ENCODE measurements at regions of chr1 and their contacts with region 1.

Region 1: GRCh38 chr1:111619635-111620440 is at the start of gene RAP1A:
- DNase-seq: peak; percentile 91 to 94
- ATAC-seq: peak; percentile 88 to 90
- H3K4me3 ChIP-seq: peak within 1 kb of the TSS; percentile 59 to 91 (median 72)
- H3K27ac ChIP-seq: peak within 1 kb of the TSS; percentile 94 to 98 (median 97)
- H3K4me1 ChIP-seq: peaks cover 36 to 48% of the 10 kb centered on the region in 2 donors
- H3K27me3 ChIP-seq: no peaks in the 10 kb centered on the region
- CTCF ChIP-seq: peak in 1 of 5 experiments; percentile 18
- POLR2A ChIP-seq: peak; percentile 82 to 86
- total RNA-seq, gene RAP1A: 49.4 to 72.1 (median 57.9) TPM

Region 2: GRCh38 chr1:111507411-111508201 is 112.2 kb before region 1 on chr1:
- in situ Hi-C with region 1: loop called in 1 of 4 experiments (anchors 10 kb)
- intact Hi-C with region 1: no loop called
- DNase-seq: peak; percentile 47 to 68
- ATAC-seq: peak; percentile 78 to 86
- H3K4me3 ChIP-seq: peak overlapping the region; percentile 47 to 55 (median 48)
- H3K27ac ChIP-seq: peak overlapping the region; percentile 85 to 92 (median 90)
- H3K4me1 ChIP-seq: peaks cover 17 to 35% of the 10 kb centered on the region in 2 donors
- H3K27me3 ChIP-seq: no peaks in the 10 kb centered on the region
- CTCF ChIP-seq: no peak
- POLR2A ChIP-seq: peak in 1 of 2 donors; percentile 10

Region 3: DNA sequence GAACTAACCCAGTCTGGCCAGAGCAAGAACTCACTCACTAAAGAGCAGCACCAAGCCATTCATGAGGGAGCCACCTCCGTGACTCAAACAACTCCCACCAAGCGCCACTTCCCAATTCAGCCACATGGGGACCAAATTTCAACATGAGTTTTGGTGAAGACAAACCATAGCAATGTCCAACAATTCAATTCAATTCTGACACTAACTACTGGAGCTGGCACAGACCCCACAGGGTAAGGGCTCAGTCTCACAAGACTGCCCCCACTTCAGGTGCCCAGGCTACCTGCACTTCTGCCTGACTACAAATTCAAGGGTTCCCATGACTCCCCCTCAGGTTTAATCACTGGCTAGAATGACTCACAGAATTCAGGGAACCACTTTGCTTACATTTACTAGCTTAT is 49.1 kb before region 1 on chr1:
- in situ Hi-C with region 1: no loop called
- intact Hi-C with region 1: no loop called
- DNase-seq: no peak
- ATAC-seq: no peak
- H3K4me3 ChIP-seq: no peak overlapping the region
- H3K27ac ChIP-seq: no peak overlapping the region
- H3K4me1 ChIP-seq: no peaks in the 10 kb centered on the region
- H3K27me3 ChIP-seq: no peaks in the 10 kb centered on the region
- CTCF ChIP-seq: peak in 2 of 5 experiments; percentile 18 to 32
- POLR2A ChIP-seq: no peak

Region 4: GRCh38 chr1:111592389-111593361 is 27.2 kb before region 1 on chr1:
- in situ Hi-C with region 1: no loop called
- intact Hi-C with region 1: loop called (anchors 1 kb)
- DNase-seq: peak; percentile 92 to 94
- ATAC-seq: peak; percentile 94 to 95
- H3K4me3 ChIP-seq: peak overlapping the region; percentile 3 to 26 (median 20)
- H3K27ac ChIP-seq: peak overlapping the region; percentile 81 to 89 (median 88)
- H3K4me1 ChIP-seq: peaks cover 24 to 36% of the 10 kb centered on the region in 2 donors
- H3K27me3 ChIP-seq: no peaks in the 10 kb centered on the region
- CTCF ChIP-seq: no peak
- POLR2A ChIP-seq: peak in 1 of 2 donors; percentile 10

Region 5: DNA sequence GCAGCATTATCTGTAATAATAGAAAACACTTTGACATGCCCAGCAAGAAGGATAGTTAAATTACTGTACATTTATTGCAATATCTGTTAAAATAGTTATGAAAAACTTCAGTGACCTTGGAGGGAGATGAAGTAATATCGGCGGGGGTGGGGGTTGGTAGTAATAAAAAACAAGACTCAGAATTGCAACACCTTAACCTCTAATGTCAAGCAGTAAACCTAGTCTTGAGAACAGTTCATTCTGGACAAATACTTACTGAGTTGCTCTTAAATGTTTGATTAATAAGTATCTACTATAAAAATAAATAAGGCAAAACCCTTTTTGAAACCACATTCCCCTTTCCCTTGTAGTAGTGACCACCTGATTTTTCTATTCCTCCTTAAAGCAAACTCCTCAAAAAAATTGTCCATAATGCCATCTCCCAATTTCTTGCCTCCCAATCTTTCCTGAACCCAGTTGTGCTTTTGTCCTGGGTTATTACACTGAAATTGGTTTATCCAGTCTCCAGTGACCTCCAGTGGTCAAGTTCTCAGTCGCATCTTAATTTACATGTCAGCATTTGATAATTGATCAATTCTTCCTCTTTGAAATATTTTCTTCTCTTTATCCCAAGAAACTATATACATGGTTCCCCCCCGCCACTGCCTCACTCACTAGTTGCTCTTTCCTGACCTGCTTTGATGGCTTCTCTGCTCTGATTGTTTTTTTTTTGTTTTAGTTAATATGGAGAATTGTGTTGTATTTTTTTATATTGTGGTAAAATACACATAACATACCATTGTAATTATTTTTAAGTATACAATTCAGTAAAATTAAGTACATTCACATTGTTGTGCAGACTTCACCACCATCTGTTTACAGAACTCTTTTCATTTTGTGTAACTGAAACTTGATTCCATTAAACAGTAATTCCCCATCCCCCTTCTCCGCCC is 36.5 kb after region 1 on chr1:
- in situ Hi-C with region 1: no loop called
- intact Hi-C with region 1: loop called (anchors 2 kb)
- DNase-seq: peak in 1 of 2 donors; percentile 28
- ATAC-seq: peak; percentile 73 to 81
- H3K4me3 ChIP-seq: no peak overlapping the region
- H3K27ac ChIP-seq: peak overlapping the region; percentile 32 to 47 (median 41)
- H3K4me1 ChIP-seq: peaks cover 28 to 39% of the 10 kb centered on the region in 2 donors
- H3K27me3 ChIP-seq: no peaks in the 10 kb centered on the region
- CTCF ChIP-seq: peak; percentile 58 to 72 (median 68)
- POLR2A ChIP-seq: no peak

Region 6: DNA sequence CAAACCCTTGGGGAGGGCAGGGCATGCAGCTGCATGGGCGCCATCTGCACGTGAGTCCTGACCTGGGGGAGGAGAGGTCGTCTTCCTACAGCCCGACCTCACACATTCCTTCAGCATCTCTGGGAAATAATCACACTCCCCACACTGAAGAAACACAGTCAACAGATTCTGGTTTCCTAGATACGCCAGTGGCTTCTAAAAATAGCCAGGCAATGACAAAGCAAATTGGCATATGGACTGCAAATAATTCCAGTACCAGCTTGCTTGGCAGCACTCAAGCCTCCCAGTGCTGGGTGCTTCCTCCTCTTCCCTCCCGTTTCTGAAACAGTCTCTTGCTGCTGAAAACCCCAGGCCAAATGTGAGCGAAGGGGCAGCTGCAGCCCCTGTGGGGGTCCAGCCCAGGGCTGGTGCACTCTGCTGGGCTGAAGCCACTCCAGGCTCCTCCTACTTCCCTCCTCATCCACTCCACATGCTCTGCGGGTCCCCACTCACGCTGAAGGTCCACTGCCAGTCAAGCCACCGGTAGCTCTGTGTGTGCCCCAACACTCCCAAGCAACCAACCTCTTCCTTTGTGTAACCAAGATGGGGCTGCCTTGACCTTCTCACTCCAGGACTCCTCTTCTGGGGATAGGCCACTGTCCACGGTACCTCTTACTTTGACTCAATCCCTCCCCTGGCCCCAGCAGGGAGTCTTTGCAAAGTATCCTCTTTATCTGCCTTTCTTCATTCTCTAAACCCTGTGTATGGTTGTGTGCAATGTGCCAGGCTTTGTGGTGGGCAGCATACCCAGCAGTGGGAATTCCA is 300.6 kb after region 1 on chr1:
- in situ Hi-C with region 1: no loop called
- intact Hi-C with region 1: no loop called
- DNase-seq: peak; percentile 54 to 55
- ATAC-seq: peak; percentile 96 to 99
- H3K4me3 ChIP-seq: peak overlapping the region in 2 of 4 donors; percentile 3 to 31
- H3K27ac ChIP-seq: peak overlapping the region; percentile 77 to 87 (median 82)
- H3K4me1 ChIP-seq: peaks cover 17 to 23% of the 10 kb centered on the region in 2 donors
- H3K27me3 ChIP-seq: no peaks in the 10 kb centered on the region
- CTCF ChIP-seq: no peak
- POLR2A ChIP-seq: no peak